Activated CD4-positive, alpha-beta memory T cell treated with anti-CD3 and anti-CD28 coated beads for 36 hours (primary cell): ENCODE measurements at regions of chr7 and their contacts with region 1.

Region 1: DNA sequence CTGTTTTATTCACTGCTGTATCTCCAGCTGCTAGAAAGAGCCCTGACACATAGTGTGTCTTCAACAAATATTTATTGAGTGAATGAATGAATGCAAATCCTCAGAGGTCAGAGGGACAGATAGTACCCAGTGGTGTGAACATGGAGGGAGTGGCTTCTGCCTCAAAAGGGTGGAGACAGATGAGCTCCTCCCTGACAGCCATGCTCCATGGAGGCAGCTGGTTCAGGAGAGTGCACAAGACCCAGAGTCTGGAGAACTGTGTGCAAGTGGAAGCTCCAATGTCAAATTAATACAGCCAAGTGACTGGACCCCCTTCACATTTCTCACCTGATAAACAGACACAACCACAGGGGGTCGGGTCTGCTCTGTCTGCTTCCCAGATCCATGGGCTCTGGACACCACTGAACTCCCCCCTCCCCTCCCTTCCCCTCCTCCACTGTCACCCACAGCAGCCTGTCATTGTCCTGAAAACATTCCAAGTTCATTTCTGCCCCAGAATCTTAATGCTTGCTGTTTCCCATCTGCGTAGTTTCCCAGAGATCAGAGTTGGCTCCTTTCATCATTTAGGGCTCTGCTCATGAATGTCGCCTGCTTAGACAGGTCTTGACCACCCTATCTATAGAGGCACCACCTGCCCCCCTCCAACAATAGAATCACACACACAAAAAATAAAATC is 312.9 kb upstream of the PODXL start:
- DNase-seq: no peak
- H3K4me3 Mint-ChIP-seq: no peak overlapping the region
- H3K27ac Mint-ChIP-seq: no peak overlapping the region
- H3K4me1 Mint-ChIP-seq: no peaks in the 10 kb centered on the region
- H3K27me3 Mint-ChIP-seq: peaks cover 8% of the 10 kb centered on the region

Region 2: DNA sequence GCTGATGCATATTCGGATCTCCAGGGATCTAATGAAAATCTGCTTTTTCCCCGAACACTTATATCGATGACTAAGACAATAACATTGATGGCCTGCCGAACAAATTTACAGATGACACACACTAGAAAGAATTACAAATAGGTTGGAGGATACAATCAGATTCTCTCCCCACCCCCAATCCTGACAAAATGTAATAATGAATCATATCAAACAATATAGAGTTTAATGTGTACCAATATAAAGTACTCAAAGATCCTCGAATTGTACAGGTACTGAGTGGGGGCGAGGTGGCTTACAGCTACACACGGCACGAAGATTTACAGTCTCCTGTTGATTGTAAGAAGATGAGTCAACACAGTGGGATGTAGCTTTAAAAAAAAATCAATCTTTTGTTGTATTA is 724.3 kb before region 1 on chr7:
- CTCF ChIA-PET with region 1: no interaction called
- POLR2A ChIA-PET with region 1: no interaction called
- intact Hi-C with region 1: no loop called
- DNase-seq: no peak
- H3K4me3 Mint-ChIP-seq: no peak overlapping the region
- H3K27ac Mint-ChIP-seq: no peak overlapping the region
- H3K4me1 Mint-ChIP-seq: no peaks in the 10 kb centered on the region
- H3K27me3 Mint-ChIP-seq: no peaks in the 10 kb centered on the region

Region 3: GRCh38 chr7:131859147-131859821 is 10.0 kb before region 1 on chr7:
- CTCF ChIA-PET with region 1: interaction called, 10 read pairs
- POLR2A ChIA-PET with region 1: no interaction called
- intact Hi-C with region 1: no loop called
- DNase-seq: peak; percentile 60
- H3K4me3 Mint-ChIP-seq: no peak overlapping the region
- H3K27ac Mint-ChIP-seq: no peak overlapping the region
- H3K4me1 Mint-ChIP-seq: no peaks in the 10 kb centered on the region
- H3K27me3 Mint-ChIP-seq: peaks cover 3% of the 10 kb centered on the region